Right ventricle myocardium inferior (tissue), 1 donor: ENCODE measurements at regions of chr7 and their contacts with region 1.

Region 1: DNA sequence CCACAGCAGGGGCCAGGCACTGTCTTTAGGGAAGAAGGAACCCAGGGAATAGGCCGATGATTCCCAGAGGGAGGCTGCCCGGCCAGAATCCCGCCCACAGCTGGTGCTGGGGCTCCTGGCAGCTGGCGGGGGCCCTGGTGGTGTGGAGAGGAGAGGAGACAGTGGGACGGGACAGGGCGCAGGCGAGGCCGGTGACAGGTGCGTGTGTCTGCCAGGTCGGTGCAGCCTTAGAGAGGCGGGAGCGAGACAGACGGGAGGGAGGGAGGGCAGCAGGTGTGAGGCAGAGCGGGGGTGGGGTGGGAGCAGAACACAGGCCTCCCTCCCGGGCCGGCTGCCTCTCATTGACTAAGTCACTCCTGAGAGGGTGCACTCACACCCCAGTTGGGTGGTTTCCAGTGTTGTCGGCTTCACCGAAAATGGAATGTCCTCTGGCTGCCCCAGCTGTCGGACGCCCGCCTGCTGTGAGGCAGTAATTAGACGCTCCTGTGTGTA is 55.2 kb downstream of the ELFN1 start:
- DNase-seq: peak; percentile 85
- ATAC-seq: peak; percentile 89

Region 2: DNA sequence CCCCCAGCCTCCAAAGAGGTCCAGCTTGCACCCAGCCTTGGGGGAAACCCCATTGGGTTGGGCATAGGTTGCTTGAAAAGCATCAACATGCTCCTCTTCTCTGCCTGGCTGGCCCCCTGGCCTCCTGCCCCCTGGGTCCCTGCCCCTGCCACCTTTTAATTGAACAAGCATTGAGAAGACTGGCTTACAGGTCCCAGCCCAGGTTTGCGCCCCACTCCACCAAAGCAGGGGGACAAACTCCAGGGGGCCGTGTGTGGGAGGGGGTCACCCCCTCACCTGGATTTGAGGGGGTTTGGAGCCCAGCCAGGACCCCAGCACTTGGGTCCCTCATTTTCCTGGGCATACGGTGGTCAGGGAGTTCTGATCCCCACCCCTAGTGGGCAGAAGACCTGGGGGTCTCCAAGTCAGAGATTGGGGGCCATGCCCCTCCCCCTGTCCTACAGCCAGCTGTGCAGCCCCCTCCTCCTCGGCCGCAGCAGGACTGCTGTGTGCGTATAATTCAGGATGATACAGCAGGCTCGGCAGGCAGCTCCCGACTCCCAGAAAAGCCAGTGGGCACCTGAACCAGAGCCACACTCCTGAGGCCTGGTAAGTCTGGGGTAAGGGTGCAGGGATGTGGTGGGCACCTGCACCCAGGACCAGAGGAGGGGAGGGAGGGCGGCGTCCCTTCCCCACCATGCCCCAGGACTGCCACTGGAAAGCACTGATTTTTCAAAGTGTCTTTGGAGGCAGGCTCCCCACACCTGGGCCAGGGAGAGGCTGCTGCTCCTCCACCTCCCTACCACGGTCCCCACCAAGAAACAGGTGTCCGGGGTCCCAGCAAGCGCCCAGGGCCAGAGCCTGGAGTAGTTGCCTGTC is 53.4 kb before region 1 on chr7:
- intact Hi-C with region 1: loop called (anchors 2 kb)
- DNase-seq: peak; percentile 62
- ATAC-seq: no peak

Region 3: GRCh38 chr7:1691601-1692514 is 33.4 kb before region 1 on chr7:
- intact Hi-C with region 1: loop called (anchors 1 kb)
- DNase-seq: no peak
- ATAC-seq: peak; percentile 87

Region 4: GRCh38 chr7:1758028-1758858 is 33.0 kb after region 1 on chr7:
- intact Hi-C with region 1: loop called (anchors 5 kb)
- DNase-seq: peak; percentile 72
- ATAC-seq: peak; percentile 66

Region 5: GRCh38 chr7:1787241-1787640 is 62.0 kb after region 1 on chr7:
- intact Hi-C with region 1: no loop called
- DNase-seq: no peak
- ATAC-seq: no peak